ENCODE measurements at regions of chr17 and their contacts with region 1.

Region 1: GRCh38 chr17:20797292-20797691 is 217.8 kb downstream of the CDRT15L2 start:
- H3K4me3 ChIP-seq: no peak overlapping the region
- H3K27ac ChIP-seq: no peak overlapping the region
- H3K4me1 ChIP-seq: no peaks in the 10 kb centered on the region
- CTCF ChIP-seq: no peak

Region 2: GRCh38 chr17:20728181-20728580 is 69.1 kb before region 1 on chr17:
- CTCF ChIA-PET with region 1: no interaction called
- POLR2A ChIA-PET with region 1: no interaction called
- H3K4me3 ChIP-seq: no peak overlapping the region
- H3K27ac ChIP-seq: no peak overlapping the region
- H3K4me1 ChIP-seq: no peaks in the 10 kb centered on the region
- CTCF ChIP-seq: no peak

Region 3: DNA sequence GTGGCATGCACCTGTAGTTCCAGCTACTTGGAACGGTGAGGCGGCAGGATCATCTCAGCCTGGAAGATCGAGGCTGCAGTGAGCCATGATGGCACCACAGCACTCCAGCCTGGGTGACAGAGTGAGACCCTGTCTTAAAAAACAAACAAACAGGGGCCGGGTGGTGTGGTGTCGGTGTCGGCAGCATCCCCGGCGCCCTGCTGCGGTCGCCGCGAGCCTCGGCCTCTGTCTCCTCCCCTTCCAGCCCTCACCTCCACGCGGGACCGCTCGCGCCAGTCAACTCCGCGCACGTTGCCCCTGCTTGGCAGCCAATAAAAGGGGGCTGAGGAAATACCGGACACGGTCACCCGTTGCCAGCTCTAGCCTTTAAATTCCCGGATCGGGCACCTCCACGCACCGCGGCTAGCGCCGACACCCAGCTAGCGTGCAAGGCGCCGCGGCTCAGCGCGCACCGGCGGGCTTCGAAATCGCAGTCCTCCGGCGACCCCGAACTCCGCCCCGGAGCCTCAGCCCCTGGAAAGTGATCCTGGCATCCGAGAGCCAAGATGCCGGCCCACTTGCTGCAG is 13.1 kb before region 1 on chr17:
- CTCF ChIA-PET with region 1: interaction called, 10 read pairs
- POLR2A ChIA-PET with region 1: interaction called, 3 read pairs
- H3K4me3 ChIP-seq: no peak overlapping the region
- H3K27ac ChIP-seq: no peak overlapping the region
- H3K4me1 ChIP-seq: no peaks in the 10 kb centered on the region
- CTCF ChIP-seq: no peak

Region 4: GRCh38 chr17:20852239-20852989 is 55.1 kb after region 1 on chr17:
- CTCF ChIA-PET with region 1: interaction called, 24 read pairs
- POLR2A ChIA-PET with region 1: no interaction called
- H3K4me3 ChIP-seq: peak overlapping the region; percentile 38
- H3K27ac ChIP-seq: peak overlapping the region; percentile 59; the same call in 1 of the 2 replicates
- H3K4me1 ChIP-seq: peaks cover 5% of the 10 kb centered on the region; the same call in 1 of the 2 replicates
- CTCF ChIP-seq: peak; percentile 62

Region 5: DNA sequence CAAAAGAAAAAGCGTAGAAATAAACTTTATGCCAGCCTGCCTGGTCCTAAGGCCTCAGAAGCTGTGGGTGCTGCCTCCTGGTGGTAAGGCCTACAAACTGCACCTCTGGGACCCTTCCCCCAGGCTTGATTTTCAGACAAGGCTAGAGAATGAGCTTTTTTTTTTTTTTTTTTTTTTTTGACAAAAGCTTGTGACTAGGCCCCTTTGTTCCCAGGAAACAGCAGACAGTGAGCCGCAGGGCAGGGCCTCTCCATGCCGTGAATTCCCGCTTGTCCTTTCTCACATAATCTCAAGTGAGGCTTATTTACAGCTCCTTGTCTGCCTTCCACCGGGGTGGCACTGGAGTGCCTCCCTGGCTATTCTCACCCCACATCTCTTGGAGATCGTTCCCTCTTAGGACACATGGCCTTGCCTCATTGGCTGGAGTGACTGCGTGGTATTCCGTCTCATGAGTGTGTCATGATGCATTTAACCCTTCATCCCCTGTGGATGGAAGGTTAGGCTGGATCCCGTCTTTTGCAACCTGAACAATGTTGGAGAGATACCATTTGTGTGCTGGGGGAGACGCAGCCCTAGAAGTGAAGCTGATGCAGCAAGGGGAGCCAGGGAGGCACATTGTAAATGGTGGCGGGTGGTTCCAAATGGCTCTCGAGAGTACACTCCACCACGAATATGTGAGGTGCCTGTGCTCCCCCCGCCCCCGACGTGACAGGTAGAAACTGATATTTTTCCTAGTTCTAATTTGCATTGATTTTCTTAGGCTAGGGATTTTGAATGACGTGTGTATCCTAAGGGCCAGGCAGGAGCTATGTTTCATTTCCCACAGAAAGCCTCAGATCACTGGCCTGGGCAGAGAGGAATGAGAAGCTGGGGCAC is 195.9 kb after region 1 on chr17:
- CTCF ChIA-PET with region 1: interaction called, 10 read pairs
- POLR2A ChIA-PET with region 1: no interaction called
- H3K4me3 ChIP-seq: no peak overlapping the region
- H3K27ac ChIP-seq: peak overlapping the region; percentile 41; the same call in 1 of the 2 replicates
- H3K4me1 ChIP-seq: peaks cover 3% of the 10 kb centered on the region; the same call in 1 of the 2 replicates
- CTCF ChIP-seq: peak; percentile 71

Region 6: GRCh38 chr17:21019976-21020586 is 222.8 kb after region 1 on chr17:
- CTCF ChIA-PET with region 1: no interaction called
- POLR2A ChIA-PET with region 1: no interaction called
- H3K4me3 ChIP-seq: no peak overlapping the region
- H3K27ac ChIP-seq: no peak overlapping the region; the same call in 1 of the 2 replicates
- H3K4me1 ChIP-seq: no peaks in the 10 kb centered on the region
- CTCF ChIP-seq: peak; percentile 55